ENCODE measurements at regions of chr9 and their contacts with region 1.

Region 1: GRCh38 chr9:86337469-86338108 is 16.6 kb downstream of the TUT7 start:
- DNase-seq: no peak
- ATAC-seq: peak; percentile 70
- H3K4me3 ChIP-seq: peak overlapping the region; percentile 46
- H3K4me3 Mint-ChIP-seq: peak overlapping the region in 9 of 10 donors; percentile 37 to 88 (median 85)
- H3K27ac ChIP-seq: no peak overlapping the region
- H3K27ac Mint-ChIP-seq: peak overlapping the region in 7 of 9 donors; percentile 31 to 81 (median 68)
- H3K4me1 ChIP-seq: peaks cover 0 to 16% of the 10 kb centered on the region in 2 donors
- H3K4me1 Mint-ChIP-seq: peaks cover 12 to 52% (median 25%) of the 10 kb centered on the region in 7 donors
- H3K27me3 ChIP-seq: no peaks in the 10 kb centered on the region
- H3K27me3 Mint-ChIP-seq: no peaks in the 10 kb centered on the region

Region 2: DNA sequence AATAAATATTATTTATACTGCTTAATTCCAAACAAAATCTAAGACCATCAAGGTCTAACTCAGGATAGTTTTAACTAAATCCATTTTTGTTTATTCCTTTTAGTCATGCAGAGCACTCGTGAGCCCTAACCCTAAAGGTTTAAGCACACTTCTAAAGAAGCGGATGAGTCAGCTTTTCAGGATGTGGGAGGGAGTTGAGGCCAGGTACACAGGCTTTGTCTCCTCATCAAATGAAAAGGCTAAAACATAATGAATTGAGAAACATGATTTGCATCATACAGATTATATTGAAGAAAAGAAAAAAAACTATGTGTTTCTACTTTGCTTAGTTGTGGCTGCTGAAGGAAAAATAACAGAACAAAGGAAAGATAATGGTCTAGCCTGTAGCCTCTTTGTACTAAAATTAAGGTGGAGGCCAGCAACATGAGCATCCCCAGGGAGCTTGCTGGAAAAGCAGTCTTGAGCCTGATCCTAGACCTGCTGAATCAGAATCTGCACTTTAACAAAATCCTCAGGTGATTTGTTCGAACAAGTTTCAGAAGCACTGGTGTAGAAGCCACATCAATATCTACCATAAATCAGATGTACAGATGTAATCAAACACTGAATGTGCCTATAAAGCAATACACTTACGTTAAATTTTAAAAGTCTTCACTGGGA is 34.1 kb before region 1 on chr9:
- CTCF ChIA-PET with region 1: no interaction called
- POLR2A ChIA-PET with region 1: no interaction called
- intact Hi-C with region 1: loop called (anchors 5 kb)
- DNase-seq: peak in 7 of 9 donors; percentile 8 to 45 (median 33)
- ATAC-seq: peak; percentile 79
- H3K4me3 ChIP-seq: no peak overlapping the region
- H3K4me3 Mint-ChIP-seq: peak overlapping the region in 7 of 10 donors; percentile 5 to 72 (median 42)
- H3K27ac ChIP-seq: peak overlapping the region; percentile 34
- H3K27ac Mint-ChIP-seq: peak overlapping the region; percentile 37 to 87 (median 75)
- H3K4me1 ChIP-seq: no peaks in the 10 kb centered on the region
- H3K4me1 Mint-ChIP-seq: peaks cover 9 to 37% (median 26%) of the 10 kb centered on the region in 7 donors
- H3K27me3 ChIP-seq: no peaks in the 10 kb centered on the region
- H3K27me3 Mint-ChIP-seq: no peaks in the 10 kb centered on the region

Region 3: DNA sequence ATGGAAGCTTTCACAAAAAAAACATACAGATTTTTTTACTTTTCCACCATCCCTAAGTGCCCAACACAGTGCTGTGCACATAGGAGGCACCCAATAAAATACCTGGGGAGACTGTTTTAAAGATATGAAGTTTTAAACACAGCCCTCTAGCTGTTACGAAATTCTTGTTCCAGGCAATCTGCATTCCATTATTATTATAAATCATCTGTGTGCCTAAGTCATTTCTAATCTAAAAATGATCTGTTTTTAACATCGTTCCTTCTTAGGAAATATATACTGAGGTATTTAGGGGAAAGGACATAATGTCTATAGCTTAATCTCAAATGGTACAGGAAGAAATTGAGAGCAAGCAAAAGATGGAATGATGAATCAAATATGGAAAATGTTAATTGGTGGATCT is 22.5 kb before region 1 on chr9:
- CTCF ChIA-PET with region 1: no interaction called
- POLR2A ChIA-PET with region 1: no interaction called
- intact Hi-C with region 1: no loop called
- DNase-seq: no peak
- ATAC-seq: no peak
- H3K4me3 ChIP-seq: no peak overlapping the region
- H3K4me3 Mint-ChIP-seq: no peak overlapping the region
- H3K27ac ChIP-seq: no peak overlapping the region
- H3K27ac Mint-ChIP-seq: peak overlapping the region in 5 of 9 donors; percentile 1 to 75 (median 40)
- H3K4me1 ChIP-seq: no peaks in the 10 kb centered on the region
- H3K4me1 Mint-ChIP-seq: peaks cover 0 to 22% (median 5%) of the 10 kb centered on the region in 7 donors
- H3K27me3 ChIP-seq: no peaks in the 10 kb centered on the region
- H3K27me3 Mint-ChIP-seq: no peaks in the 10 kb centered on the region

Region 4: GRCh38 chr9:86413966-86414880 is 76.6 kb after region 1 on chr9:
- CTCF ChIA-PET with region 1: no interaction called
- POLR2A ChIA-PET with region 1: no interaction called
- intact Hi-C with region 1: loop called in 1 of 2 experiments (anchors 10 kb)
- DNase-seq: peak in 5 of 9 donors; percentile 8 to 39 (median 17)
- ATAC-seq: no peak
- H3K4me3 ChIP-seq: no peak overlapping the region
- H3K4me3 Mint-ChIP-seq: no peak overlapping the region
- H3K27ac ChIP-seq: no peak overlapping the region
- H3K27ac Mint-ChIP-seq: no peak overlapping the region
- H3K4me1 ChIP-seq: no peaks in the 10 kb centered on the region
- H3K4me1 Mint-ChIP-seq: no peaks in the 10 kb centered on the region
- H3K27me3 ChIP-seq: no peaks in the 10 kb centered on the region
- H3K27me3 Mint-ChIP-seq: peaks cover 0 to 12% (median 9%) of the 10 kb centered on the region in 5 donors

Measured in naive thymus-derived CD4-positive, alpha-beta T cell (primary cell).